Gastrocnemius medialis (tissue), 4 donors: ENCODE measurements at regions of chr6 and their contacts with region 1.

Region 1: DNA sequence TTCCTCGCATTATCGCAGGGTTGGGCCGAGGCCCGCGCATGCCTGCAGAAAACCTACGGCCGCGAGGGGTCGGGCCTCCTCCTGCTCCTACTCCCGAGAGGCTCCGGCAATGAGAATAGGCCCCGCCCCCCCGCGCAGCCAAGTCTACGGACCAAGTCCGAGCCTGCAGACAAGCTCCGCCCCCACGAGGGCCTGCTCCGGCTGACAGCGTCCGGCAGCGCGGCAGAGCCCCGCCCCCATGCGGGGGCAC is 3.1 kb upstream of the GPSM3 start:
- DNase-seq: peak; percentile 100
- ATAC-seq: peak in 1 of 2 donors; percentile 83
- H3K4me3 ChIP-seq: peak overlapping the region in 3 of 4 donors; percentile 67 to 86 (median 74)
- H3K27ac ChIP-seq: peak overlapping the region; percentile 91 to 98 (median 96)
- H3K4me1 ChIP-seq: peaks cover 28 to 32% of the 10 kb centered on the region in 2 donors
- H3K27me3 ChIP-seq: no peaks in the 10 kb centered on the region
- CTCF ChIP-seq: peak in 4 of 5 experiments; percentile 54 to 70 (median 56)
- POLR2A ChIP-seq: no peak

Region 2: GRCh38 chr6:31546962-31547726 is 648.4 kb before region 1 on chr6 and contains the start of gene NFKBIL1:
- in situ Hi-C with region 1: loop called in 1 of 4 experiments (anchors 25 kb)
- intact Hi-C with region 1: loop called (anchors 5 kb)
- DNase-seq: peak; percentile 96
- ATAC-seq: peak; percentile 97 to 98
- H3K4me3 ChIP-seq: peak within 1 kb of the TSS; percentile 48 to 72 (median 63)
- H3K27ac ChIP-seq: peak within 1 kb of the TSS; percentile 86 to 97 (median 90)
- H3K4me1 ChIP-seq: peaks cover 20 to 22% of the 10 kb centered on the region in 2 donors
- H3K27me3 ChIP-seq: no peaks in the 10 kb centered on the region
- CTCF ChIP-seq: peak in 1 of 5 experiments; percentile 13
- POLR2A ChIP-seq: peak; percentile 64 to 68
- total RNA-seq, gene NFKBIL1: 17.6 to 21.7 (median 20.3) TPM

Region 3: DNA sequence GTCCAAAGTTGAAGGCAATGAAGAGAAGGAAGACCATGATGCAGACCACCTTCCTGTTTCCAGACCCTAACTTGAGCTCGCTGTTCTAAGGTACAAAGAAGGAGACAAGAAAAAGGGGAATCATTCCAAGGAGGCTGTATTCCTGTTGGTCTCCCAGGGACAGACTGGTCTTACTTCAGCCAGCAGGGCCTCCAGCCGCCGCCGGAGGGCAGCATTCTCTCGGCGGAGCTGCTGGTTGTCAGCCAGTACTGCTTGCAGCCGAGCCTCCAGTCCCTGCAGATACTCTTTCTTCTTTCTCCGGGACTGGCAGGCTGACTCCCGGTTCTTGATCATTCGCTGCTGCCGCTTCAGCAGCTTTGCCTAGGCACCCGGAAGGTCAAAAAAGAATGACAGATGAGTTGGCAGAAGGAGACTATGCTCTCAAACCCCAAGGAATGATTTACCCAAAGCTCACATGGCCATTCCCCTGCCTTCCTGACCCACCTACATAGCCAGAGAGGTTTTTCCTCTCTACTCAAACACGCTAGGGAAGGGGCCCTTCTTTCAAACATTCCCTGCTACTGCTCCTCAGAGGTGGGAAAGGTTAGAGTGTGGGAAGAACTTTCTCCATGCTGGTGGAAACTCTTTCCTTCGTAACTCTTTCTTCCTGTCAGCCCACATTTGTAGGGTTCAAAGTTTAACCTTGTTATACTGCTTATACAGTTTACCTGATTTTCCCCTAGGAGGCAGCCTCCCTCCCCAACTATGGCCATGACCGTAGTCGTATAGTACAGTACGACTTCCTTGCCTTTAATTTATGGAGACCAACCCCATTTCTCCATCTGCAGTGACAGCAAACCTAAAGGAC is 76.6 kb before region 1 on chr6:
- in situ Hi-C with region 1: loop called in 1 of 4 experiments (anchors 10 kb)
- intact Hi-C with region 1: loop called (anchors 1 kb)
- DNase-seq: peak; percentile 64 to 83
- ATAC-seq: peak; percentile 82 to 88
- H3K4me3 ChIP-seq: no peak overlapping the region
- H3K27ac ChIP-seq: peak overlapping the region in 2 of 4 donors; percentile 25 to 43
- H3K4me1 ChIP-seq: peaks cover 3 to 8% of the 10 kb centered on the region in 2 donors
- H3K27me3 ChIP-seq: no peaks in the 10 kb centered on the region
- CTCF ChIP-seq: peak; percentile 82 to 91 (median 88)
- POLR2A ChIP-seq: no peak

Region 4: GRCh38 chr6:32127717-32128592 is 67.6 kb before region 1 on chr6 and contains the start of gene ATF6B:
- in situ Hi-C with region 1: loop called in 2 of 4 experiments (anchors 5 to 10 kb)
- intact Hi-C with region 1: loop called (anchors 1 kb)
- DNase-seq: peak; percentile 100
- ATAC-seq: peak; percentile 95 to 96
- H3K4me3 ChIP-seq: peak within 1 kb of the TSS; percentile 91 to 99 (median 96)
- H3K27ac ChIP-seq: peak within 1 kb of the TSS; percentile 89 to 93 (median 92)
- H3K4me1 ChIP-seq: peaks cover 24 to 26% of the 10 kb centered on the region in 2 donors
- H3K27me3 ChIP-seq: no peaks in the 10 kb centered on the region
- CTCF ChIP-seq: no peak
- POLR2A ChIP-seq: peak; percentile 57 to 67
- total RNA-seq, gene ATF6B: 6.8 to 18.4 (median 9.5) TPM

Region 5: DNA sequence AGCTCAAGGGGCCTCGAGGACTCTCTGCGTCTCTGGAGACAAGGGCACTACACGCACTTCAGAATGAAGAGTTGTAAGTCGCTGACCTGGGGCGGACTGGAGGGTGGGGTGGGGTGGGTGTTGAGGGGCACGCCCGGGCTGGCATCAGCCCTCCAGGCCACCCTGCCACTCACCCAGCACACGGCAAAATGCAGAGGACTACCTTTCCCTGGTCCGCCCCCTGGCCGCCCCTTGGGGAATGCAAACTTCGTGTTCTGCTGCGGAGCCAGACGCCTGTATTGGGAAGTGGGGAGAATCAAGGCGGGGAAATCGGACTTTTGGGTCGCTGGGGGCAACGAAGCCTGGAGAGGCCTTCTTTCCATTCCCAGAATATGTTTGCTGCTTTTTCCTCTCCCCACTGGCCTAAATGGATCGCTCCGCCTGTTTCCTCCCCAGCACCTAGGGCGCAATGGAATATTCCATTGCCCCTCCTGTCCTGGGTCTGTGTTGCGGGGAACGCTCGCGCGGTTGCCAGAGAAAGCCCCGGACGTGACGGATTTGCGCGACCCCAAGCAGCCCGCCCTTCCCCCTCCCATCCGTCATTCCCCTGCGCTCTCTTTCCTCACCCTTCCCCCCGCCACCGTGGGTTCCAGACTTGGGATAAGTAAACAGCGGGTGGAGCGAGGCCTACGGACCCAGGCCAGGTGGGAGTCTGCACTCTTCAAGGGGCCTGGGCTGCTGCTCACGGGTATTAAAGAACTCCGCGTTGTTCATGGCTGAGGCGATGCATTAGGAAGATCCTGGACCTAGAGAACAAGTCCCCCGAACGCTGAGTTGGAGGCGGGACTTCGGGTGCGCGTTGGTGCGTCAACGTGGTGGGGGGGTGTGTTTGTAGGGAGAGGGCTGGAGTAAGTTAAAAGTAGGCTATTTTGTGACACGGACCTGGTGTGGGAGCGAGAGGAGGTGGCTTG is 41.7 kb before region 1 on chr6 and contains the start of gene PPT2:
- in situ Hi-C with region 1: no loop called
- intact Hi-C with region 1: loop called (anchors 2 kb)
- DNase-seq: peak; percentile 80 to 85
- ATAC-seq: peak; percentile 85 to 86
- H3K4me3 ChIP-seq: peak within 1 kb of the TSS; percentile 77 to 97 (median 84)
- H3K27ac ChIP-seq: peak within 1 kb of the TSS; percentile 77 to 93 (median 87)
- H3K4me1 ChIP-seq: peaks cover 25 to 29% of the 10 kb centered on the region in 2 donors
- H3K27me3 ChIP-seq: peaks cover 7 to 19% (median 8%) of the 10 kb centered on the region in 3 donors
- CTCF ChIP-seq: peak in 2 of 5 experiments; percentile 14 to 15
- POLR2A ChIP-seq: peak; percentile 23 to 38
- total RNA-seq, gene PPT2: 16.2 to 72.7 (median 21.4) TPM